ENCODE measurements at regions of chr6 and their contacts with region 1.

Region 1: DNA sequence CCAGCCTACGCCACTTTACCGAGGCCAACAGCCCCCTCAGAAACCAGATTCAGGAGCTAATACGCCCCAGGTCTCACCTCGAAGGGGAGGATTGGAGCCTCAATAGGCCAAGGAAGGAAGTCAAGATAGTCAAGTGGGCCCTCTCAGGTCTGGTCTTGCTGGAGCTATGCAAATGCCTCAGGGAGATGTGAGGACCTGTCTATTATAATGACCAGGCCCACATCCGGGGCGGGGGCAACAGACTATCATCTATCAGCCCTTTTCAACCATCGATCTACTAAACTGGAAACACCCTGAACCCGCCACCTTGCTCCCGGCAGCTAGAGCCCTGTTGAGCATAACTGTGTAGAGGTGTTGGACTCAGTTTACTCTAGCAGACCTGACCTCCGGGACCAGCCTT is 12.7 kb upstream of the GSTA3 start:
- DNase-seq: no peak
- H3K4me3 ChIP-seq: no peak overlapping the region
- H3K4me3 Mint-ChIP-seq: no peak overlapping the region
- H3K27ac Mint-ChIP-seq: no peak overlapping the region
- H3K4me1 ChIP-seq: peaks cover 44% of the 10 kb centered on the region
- H3K4me1 Mint-ChIP-seq: peaks cover 50% of the 10 kb centered on the region
- H3K27me3 ChIP-seq: no peaks in the 10 kb centered on the region
- H3K27me3 Mint-ChIP-seq: no peaks in the 10 kb centered on the region
- CTCF ChIP-seq: no peak

Region 2: GRCh38 chr6:52946306-52946705 is 24.1 kb after region 1 on chr6:
- CTCF ChIA-PET with region 1: no interaction called
- POLR2A ChIA-PET with region 1: no interaction called
- intact Hi-C with region 1: loop called (anchors 1 kb)
- DNase-seq: peak; percentile 78 to 82
- H3K4me3 ChIP-seq: no peak overlapping the region
- H3K4me3 Mint-ChIP-seq: peak overlapping the region; percentile 49
- H3K27ac Mint-ChIP-seq: peak overlapping the region; percentile 76
- H3K4me1 ChIP-seq: peaks cover 59% of the 10 kb centered on the region
- H3K4me1 Mint-ChIP-seq: peaks cover 43% of the 10 kb centered on the region
- H3K27me3 ChIP-seq: no peaks in the 10 kb centered on the region
- H3K27me3 Mint-ChIP-seq: no peaks in the 10 kb centered on the region
- CTCF ChIP-seq: no peak

Region 3: DNA sequence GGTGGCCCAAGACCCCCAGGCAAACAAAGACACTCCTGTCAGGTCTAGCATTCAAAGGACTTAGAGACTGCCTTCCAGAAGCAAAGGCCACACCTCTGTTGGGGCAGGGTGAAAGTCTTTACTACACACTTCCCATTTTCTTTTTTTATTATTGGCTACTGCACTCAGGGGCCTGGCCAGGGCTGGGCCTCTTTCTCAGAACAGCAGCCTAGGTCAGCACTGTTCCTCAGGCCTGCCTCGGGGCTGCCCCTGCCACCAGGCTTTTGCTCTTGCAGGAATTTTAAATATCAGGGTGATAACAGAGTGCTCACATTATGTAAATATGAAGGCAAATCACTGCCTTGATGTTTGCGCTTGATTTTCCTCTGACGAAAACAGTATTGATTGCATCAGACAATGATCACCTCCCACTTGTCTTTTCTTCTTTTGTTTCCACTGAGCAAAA is 54.5 kb after region 1 on chr6:
- CTCF ChIA-PET with region 1: no interaction called
- POLR2A ChIA-PET with region 1: no interaction called
- intact Hi-C with region 1: loop called (anchors 2 kb)
- DNase-seq: peak; percentile 54 to 60
- H3K4me3 ChIP-seq: no peak overlapping the region
- H3K4me3 Mint-ChIP-seq: peak overlapping the region; percentile 12
- H3K27ac Mint-ChIP-seq: peak overlapping the region; percentile 85
- H3K4me1 ChIP-seq: peaks cover 14% of the 10 kb centered on the region
- H3K4me1 Mint-ChIP-seq: peaks cover 20% of the 10 kb centered on the region
- H3K27me3 ChIP-seq: no peaks in the 10 kb centered on the region
- H3K27me3 Mint-ChIP-seq: no peaks in the 10 kb centered on the region
- CTCF ChIP-seq: no peak